ENCODE measurements at regions of chr6 and their contacts with region 1.

Region 1: GRCh38 chr6:53651764-53652401 is 13.7 kb downstream of the KLHL31 start:
- DNase-seq: peak; percentile 81

Region 2: DNA sequence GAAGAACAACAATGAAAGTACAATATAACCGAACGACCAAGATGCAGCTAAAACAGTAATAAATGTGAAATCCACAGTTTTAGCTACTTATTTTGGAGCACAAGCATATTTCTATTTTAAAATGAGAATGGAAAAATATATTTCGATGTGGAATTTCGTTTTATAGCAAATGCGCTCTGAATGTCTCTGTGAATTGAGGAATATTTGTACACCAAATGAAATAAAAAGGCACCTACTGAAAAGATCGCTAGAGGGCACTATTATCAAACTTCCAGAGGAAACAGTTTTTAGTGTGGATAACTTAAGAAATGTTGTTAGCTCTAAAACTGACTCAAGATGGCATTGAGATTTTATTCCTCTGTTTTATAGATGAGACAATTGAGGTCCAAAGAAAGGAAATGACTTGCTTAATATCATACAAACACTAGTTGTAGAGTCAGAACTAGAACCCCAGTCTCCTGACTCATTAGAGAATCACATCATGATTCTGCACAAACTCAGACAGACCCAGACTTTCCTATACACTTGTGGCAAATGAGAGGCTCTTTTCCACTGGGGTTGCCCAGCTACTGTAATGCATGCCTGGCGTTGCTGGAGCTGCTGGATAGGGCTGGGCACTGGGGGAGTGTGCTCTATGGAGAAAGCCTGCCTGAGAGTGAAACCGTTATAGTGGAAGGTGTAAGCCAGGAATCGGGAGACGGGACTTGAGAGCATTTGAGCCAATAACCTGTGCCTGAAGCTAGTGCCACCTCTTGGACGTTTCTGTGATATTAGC is 158.8 kb before region 1 on chr6:
- CTCF ChIA-PET with region 1: interaction called, 16 read pairs
- POLR2A ChIA-PET with region 1: interaction called, 4 read pairs
- DNase-seq: peak; percentile 32

Measured in HEK293T (cell line).